ENCODE measurements at regions of chr17 and their contacts with region 1.

Region 1: DNA sequence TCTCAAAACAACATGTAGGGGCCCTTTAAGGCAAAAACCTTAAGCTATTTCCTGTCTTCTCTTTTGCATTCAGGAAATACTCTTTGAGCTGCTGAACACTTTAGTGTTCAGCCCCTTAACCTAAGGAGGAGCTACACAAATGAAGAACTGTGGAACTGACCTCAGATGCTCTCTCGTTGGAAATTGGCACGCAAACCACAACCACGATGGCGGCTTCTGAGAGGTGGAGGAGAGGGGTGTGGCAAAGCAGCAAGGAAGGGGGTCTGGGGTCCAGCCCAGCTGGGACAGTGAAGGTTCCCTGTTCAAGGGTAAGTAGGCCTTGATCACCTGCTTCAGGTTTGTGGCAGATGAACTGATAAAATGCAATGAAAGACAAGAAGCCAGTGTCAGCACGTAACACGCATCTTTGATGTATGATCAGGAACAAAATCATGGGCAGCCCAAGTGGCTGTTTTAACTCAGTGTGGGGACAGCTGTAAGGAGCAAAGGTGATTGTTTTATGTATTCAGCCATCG is 291.6 kb upstream of the TNRC6C start:
- DNase-seq: peak; percentile 37 to 87 (median 83)
- ATAC-seq: peak; percentile 90
- H3K4me3 ChIP-seq: peak overlapping the region; percentile 55
- H3K4me3 Mint-ChIP-seq: peak overlapping the region; percentile 80 to 97 (median 93)
- H3K27ac ChIP-seq: peak overlapping the region; percentile 75
- H3K27ac Mint-ChIP-seq: peak overlapping the region; percentile 96 to 99 (median 98)
- H3K4me1 ChIP-seq: peaks cover 26 to 40% of the 10 kb centered on the region in 2 donors
- H3K4me1 Mint-ChIP-seq: peaks cover 37 to 74% (median 64%) of the 10 kb centered on the region in 7 donors
- H3K27me3 ChIP-seq: no peaks in the 10 kb centered on the region
- H3K27me3 Mint-ChIP-seq: no peaks in the 10 kb centered on the region

Region 2: DNA sequence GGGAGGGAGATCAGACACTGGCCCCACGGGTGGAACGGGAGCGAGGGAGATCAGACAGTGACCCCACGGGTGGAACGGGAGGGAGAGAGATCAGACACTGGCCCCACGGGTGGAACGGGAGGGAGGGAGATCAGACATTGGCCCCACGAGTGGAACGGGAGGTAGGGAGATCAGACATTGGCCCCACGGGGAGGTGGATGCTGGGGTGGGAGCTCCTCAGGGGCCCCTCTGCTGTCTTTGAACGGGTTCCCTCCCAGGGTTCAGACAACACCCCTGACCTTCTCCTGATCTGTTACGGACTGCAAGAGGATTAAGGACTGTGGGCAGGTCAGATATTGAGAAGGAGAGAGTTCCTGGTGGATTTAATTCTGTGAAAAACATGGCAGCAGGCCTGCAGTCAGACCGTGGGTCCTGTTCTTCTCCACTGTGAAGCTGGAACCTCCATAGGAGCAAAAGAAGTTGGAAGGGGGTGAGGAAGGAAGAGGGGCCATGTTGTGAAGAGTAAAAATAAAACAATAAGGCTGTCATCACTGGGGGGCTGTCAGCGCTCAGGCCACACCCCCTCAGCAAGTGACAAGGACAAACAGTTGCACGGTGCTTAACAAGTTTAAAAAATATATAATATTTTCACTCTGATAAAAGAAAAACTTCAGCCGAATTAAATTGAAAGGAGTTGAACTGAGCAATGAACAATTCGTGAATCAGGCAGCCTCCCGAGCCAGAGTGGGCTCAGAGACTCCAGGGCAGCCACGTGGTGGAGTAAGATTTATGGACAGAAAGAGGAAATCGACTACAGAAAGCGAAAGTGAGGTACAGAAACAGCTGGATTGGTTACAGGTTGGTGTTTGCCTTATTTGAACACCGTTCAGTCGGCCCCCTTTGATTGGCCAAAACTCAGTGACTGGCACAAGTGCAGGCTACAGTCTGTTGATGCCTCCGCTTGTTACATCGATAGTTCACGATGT is 57.1 kb before region 1 on chr17:
- CTCF ChIA-PET with region 1: interaction called, 6 read pairs
- POLR2A ChIA-PET with region 1: interaction called, 11 read pairs
- intact Hi-C with region 1: loop called in 1 of 2 experiments (anchors 1 kb)
- DNase-seq: peak in 8 of 9 donors; percentile 30 to 86 (median 81)
- ATAC-seq: peak; percentile 95
- H3K4me3 ChIP-seq: peak overlapping the region; percentile 54
- H3K4me3 Mint-ChIP-seq: peak overlapping the region; percentile 75 to 92 (median 84)
- H3K27ac ChIP-seq: peak overlapping the region; percentile 77
- H3K27ac Mint-ChIP-seq: peak overlapping the region; percentile 87 to 98 (median 92)
- H3K4me1 ChIP-seq: peaks cover 11 to 21% of the 10 kb centered on the region in 2 donors
- H3K4me1 Mint-ChIP-seq: peaks cover 21 to 35% (median 31%) of the 10 kb centered on the region in 7 donors
- H3K27me3 ChIP-seq: no peaks in the 10 kb centered on the region
- H3K27me3 Mint-ChIP-seq: peaks cover 0 to 9% (median 0%) of the 10 kb centered on the region in 5 donors

Region 3: DNA sequence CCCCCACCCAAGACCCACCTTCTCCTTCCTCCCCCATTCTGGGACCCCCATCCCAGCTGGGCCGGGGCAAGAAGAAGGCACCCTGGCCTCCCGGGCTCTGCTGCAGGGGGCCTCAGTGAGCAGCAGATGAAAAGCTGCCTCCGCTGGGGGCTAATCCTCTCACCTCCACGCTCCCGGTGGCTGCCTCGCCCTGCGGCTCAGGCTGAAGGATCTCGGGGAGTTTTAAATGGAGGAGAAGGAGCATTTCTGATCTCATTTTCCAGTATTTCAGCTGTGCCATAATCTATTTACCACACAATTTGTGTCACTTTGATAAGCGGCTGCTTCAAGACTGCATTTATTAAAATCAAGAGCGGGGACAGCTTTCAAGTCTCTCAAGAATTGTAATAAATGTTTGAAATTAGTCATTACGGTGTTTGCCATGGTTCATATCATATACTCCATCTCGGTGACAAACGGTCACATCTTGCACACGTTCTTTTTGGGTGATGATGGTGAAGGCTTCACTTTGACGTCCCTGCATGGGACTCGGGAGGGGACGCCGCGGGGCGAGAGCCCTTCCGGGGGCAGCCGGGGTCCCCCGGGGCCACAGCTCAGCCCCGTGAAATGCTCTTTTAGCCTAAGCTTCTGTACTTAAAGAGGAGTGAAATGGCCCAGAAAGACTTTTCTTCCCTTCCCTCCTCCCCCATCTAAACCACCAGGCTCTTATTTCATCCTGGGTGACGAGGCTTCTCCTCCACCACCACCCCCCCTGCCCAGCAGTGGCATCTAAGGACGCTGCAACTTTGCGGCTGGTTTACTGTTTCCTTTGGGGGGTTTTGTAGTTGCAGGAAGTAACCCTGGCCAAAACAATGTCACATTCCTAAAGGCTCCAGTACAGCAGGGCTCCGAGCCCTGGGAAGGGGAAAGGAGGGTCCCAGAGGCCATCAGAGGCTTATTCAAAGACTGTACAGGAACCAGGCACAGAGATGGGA is 21.6 kb before region 1 on chr17:
- CTCF ChIA-PET with region 1: no interaction called
- POLR2A ChIA-PET with region 1: interaction called, 17 read pairs
- intact Hi-C with region 1: loop called (anchors 1 kb)
- DNase-seq: peak in 8 of 9 donors; percentile 45 to 74 (median 64)
- ATAC-seq: peak; percentile 84
- H3K4me3 ChIP-seq: peak overlapping the region; percentile 34
- H3K4me3 Mint-ChIP-seq: peak overlapping the region; percentile 63 to 81 (median 74)
- H3K27ac ChIP-seq: peak overlapping the region; percentile 55
- H3K27ac Mint-ChIP-seq: peak overlapping the region; percentile 84 to 94 (median 90)
- H3K4me1 ChIP-seq: peaks cover 13 to 21% of the 10 kb centered on the region in 2 donors
- H3K4me1 Mint-ChIP-seq: peaks cover 0 to 39% (median 31%) of the 10 kb centered on the region in 7 donors
- H3K27me3 ChIP-seq: no peaks in the 10 kb centered on the region
- H3K27me3 Mint-ChIP-seq: peaks cover 0 to 12% (median 0%) of the 10 kb centered on the region in 5 donors

Region 4: DNA sequence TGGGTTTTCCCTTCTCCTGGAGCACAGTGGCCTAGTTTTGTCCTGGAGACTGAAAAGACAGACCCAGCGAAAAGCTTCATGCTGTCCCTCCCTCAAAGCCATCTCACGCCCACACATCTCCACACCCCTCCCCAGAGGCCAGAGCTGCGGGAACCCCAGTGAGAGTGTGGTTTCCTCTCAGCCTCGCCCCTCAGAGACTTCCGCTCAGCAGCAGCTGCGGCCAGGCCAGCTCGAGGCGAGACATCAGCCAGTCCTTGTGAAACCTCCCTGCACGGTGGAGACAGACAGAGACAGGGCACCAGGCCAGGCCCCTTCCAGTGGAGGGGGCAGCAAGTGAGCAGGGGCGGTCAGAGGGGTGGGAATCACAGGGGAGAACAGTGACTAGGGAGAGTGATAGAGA is 214.6 kb after region 1 on chr17:
- CTCF ChIA-PET with region 1: no interaction called
- POLR2A ChIA-PET with region 1: no interaction called
- intact Hi-C with region 1: loop called (anchors 5 kb)
- DNase-seq: peak; percentile 35 to 78 (median 45)
- ATAC-seq: peak; percentile 70
- H3K4me3 ChIP-seq: peak overlapping the region; percentile 61
- H3K4me3 Mint-ChIP-seq: peak overlapping the region; percentile 71 to 94 (median 81)
- H3K27ac ChIP-seq: peak overlapping the region; percentile 93
- H3K27ac Mint-ChIP-seq: peak overlapping the region; percentile 92 to 99 (median 98)
- H3K4me1 ChIP-seq: peaks cover 62 to 79% of the 10 kb centered on the region in 2 donors
- H3K4me1 Mint-ChIP-seq: peaks cover 58 to 98% (median 89%) of the 10 kb centered on the region in 7 donors
- H3K27me3 ChIP-seq: no peaks in the 10 kb centered on the region
- H3K27me3 Mint-ChIP-seq: peaks cover 0 to 17% (median 0%) of the 10 kb centered on the region in 5 donors

Measured in naive thymus-derived CD4-positive, alpha-beta T cell (primary cell).